Heart left ventricle (tissue), 16 donors: ENCODE measurements at regions of chr16 and their contacts with region 1.

Region 1: GRCh38 chr16:80526425-80527061 is 14.2 kb upstream of the DYNLRB2 start:
- DNase-seq: peak in 3 of 5 donors; percentile 31 to 49 (median 40)
- ATAC-seq: peak in 1 of 4 donors; percentile 56
- H3K4me3 ChIP-seq: no peak overlapping the region
- H3K27ac ChIP-seq: no peak overlapping the region
- H3K4me1 ChIP-seq: peaks cover 0 to 3% (median 0%) of the 10 kb centered on the region in 12 donors
- H3K27me3 ChIP-seq: peaks cover 0 to 13% (median 4%) of the 10 kb centered on the region in 9 donors
- CTCF ChIP-seq: peak; percentile 75 to 94 (median 86)
- POLR2A ChIP-seq: no peak

Region 2: GRCh38 chr16:80459331-80459777 is 67.2 kb before region 1 on chr16:
- intact Hi-C with region 1: no loop called
- DNase-seq: peak in 4 of 5 donors; percentile 30 to 47 (median 38)
- ATAC-seq: peak; percentile 65 to 90 (median 84)
- H3K4me3 ChIP-seq: no peak overlapping the region
- H3K27ac ChIP-seq: peak overlapping the region in 7 of 12 donors; percentile 7 to 73 (median 44)
- H3K4me1 ChIP-seq: peaks cover 0 to 6% (median 0%) of the 10 kb centered on the region in 12 donors
- H3K27me3 ChIP-seq: peaks cover 0 to 5% (median 0%) of the 10 kb centered on the region in 9 donors
- CTCF ChIP-seq: no peak
- POLR2A ChIP-seq: no peak

Region 3: DNA sequence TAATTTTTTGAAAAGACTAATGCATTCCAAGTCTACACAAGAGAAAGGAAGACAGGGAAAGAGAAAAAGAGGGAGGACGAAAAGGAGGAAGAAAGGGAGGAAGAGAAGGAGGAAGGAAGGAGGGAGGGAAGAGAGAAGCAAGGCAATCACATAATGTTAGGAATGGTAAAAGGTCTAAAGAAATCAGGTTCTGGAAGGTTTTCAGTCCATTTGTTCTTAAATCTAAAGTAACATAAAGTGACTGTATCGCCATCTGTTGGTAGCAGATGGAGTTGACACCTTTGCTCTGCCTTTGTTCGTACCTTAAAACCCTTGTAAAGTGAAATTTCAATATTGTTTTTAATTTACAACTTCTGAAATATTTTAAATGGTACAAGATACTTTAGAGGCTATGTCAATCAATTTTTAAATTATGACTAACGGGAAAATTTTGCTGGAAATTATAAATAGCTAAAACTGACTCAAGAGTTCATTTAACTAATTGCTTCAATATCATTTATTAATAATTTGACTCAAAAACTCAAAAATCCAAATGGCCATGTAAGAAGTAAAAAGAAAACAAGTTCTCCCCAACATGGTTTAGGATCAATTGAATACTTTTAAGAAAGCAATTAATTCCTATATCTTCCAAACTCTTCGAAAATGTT is 298.3 kb after region 1 on chr16:
- intact Hi-C with region 1: loop called in 1 of 10 experiments (anchors 10 kb)
- DNase-seq: no peak
- ATAC-seq: no peak
- H3K4me3 ChIP-seq: no peak overlapping the region
- H3K27ac ChIP-seq: no peak overlapping the region
- H3K4me1 ChIP-seq: no peaks in the 10 kb centered on the region
- H3K27me3 ChIP-seq: peaks cover 0 to 4% (median 0%) of the 10 kb centered on the region in 9 donors
- CTCF ChIP-seq: peak; percentile 39 to 80 (median 68)
- POLR2A ChIP-seq: no peak